ENCODE measurements at regions of chr6 and their contacts with region 1.

Region 1: GRCh38 chr6:3251462-3252314 is 7.1 kb upstream of the PSMG4 start:
- DNase-seq: peak; percentile 90
- H3K4me3 ChIP-seq: no peak overlapping the region
- H3K27ac ChIP-seq: peak overlapping the region in 1 of 4 donors; percentile 37
- H3K4me1 ChIP-seq: peaks cover 0 to 33% (median 25%) of the 10 kb centered on the region in 4 donors
- H3K27me3 ChIP-seq: no peaks in the 10 kb centered on the region
- CTCF ChIP-seq: peak; percentile 81 to 99 (median 94)
- EP300 ChIP-seq: no peak
- POLR2A ChIP-seq: no peak

Region 2: GRCh38 chr6:3125815-3126214 is 125.9 kb before region 1 on chr6:
- intact Hi-C with region 1: loop called (anchors 1 kb)
- DNase-seq: no peak
- H3K4me3 ChIP-seq: no peak overlapping the region
- H3K27ac ChIP-seq: no peak overlapping the region
- H3K4me1 ChIP-seq: no peaks in the 10 kb centered on the region
- H3K27me3 ChIP-seq: no peaks in the 10 kb centered on the region
- CTCF ChIP-seq: no peak
- EP300 ChIP-seq: no peak
- POLR2A ChIP-seq: no peak

Region 3: DNA sequence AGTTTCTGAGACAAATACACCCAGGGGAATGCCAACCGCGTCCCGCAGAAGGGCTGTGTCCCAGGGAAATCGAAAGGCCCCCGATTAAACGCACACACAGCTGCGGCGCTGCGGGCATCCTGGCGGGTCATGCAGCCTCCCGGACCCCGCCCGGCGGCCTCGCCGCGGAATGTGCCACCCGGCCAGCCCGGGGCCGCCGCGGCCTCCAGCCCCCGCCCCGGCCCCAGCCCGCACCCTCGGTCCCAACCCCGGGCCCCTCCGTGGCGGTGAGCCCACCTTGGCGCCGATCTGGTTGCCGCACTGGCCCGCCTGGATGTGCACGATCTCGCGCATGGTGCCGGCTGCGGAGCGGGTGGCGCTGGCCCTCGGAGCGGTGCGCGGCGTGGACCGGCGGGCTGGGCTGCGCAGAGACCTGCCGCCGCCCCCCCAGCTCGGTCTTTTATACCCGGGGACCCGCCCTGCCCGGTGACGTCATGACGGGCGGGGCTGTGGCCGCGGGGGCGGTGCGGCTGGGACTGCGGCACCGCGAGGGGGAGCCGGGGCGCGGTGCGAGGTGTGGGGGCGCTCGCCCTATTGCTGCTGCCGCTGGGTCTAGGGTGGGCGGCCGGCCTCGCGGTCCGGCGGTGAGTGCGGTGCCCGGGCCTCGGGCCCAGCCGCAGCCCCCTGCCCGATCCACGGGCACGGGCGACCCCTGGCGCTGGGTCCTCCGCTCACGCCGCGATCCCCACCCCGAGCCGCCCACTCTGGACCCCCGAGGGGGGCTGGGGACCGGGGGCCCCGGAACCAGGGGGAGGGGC is 94.4 kb before region 1 on chr6 and contains the start of gene TUBB2A:
- intact Hi-C with region 1: loop called (anchors 2 kb)
- DNase-seq: peak; percentile 95
- H3K4me3 ChIP-seq: peak within 1 kb of the TSS; percentile 66 to 99 (median 71)
- H3K27ac ChIP-seq: peak within 1 kb of the TSS; percentile 90 to 99 (median 96)
- H3K4me1 ChIP-seq: peaks cover 0 to 34% (median 14%) of the 10 kb centered on the region in 4 donors
- H3K27me3 ChIP-seq: no peaks in the 10 kb centered on the region
- CTCF ChIP-seq: peak in 2 of 4 experiments; percentile 12 to 52
- EP300 ChIP-seq: peak in 1 of 4 donors; percentile 45
- POLR2A ChIP-seq: peak; percentile 56 to 81
- total RNA-seq, gene TUBB2A: 54.5 to 106 (median 97.9) TPM

Region 4: GRCh38 chr6:3209114-3210023 is 42.3 kb before region 1 on chr6:
- intact Hi-C with region 1: no loop called
- DNase-seq: no peak
- H3K4me3 ChIP-seq: no peak overlapping the region
- H3K27ac ChIP-seq: peak overlapping the region; percentile 12 to 76 (median 28)
- H3K4me1 ChIP-seq: peaks cover 0 to 29% (median 21%) of the 10 kb centered on the region in 4 donors
- H3K27me3 ChIP-seq: no peaks in the 10 kb centered on the region
- CTCF ChIP-seq: no peak
- EP300 ChIP-seq: no peak
- POLR2A ChIP-seq: no peak

Region 5: GRCh38 chr6:3231247-3232016 is 20.3 kb before region 1 on chr6:
- intact Hi-C with region 1: loop called (anchors 2 kb)
- DNase-seq: peak; percentile 91
- H3K4me3 ChIP-seq: peak overlapping the region; percentile 57 to 68 (median 62)
- H3K27ac ChIP-seq: peak overlapping the region; percentile 82 to 91 (median 89)
- H3K4me1 ChIP-seq: peaks cover 0 to 57% (median 49%) of the 10 kb centered on the region in 4 donors
- H3K27me3 ChIP-seq: peaks cover 19 to 70% (median 42%) of the 10 kb centered on the region in 3 donors
- CTCF ChIP-seq: no peak
- EP300 ChIP-seq: peak in 1 of 4 donors; percentile 12
- POLR2A ChIP-seq: peak in 1 of 2 donors; percentile 43

Region 6: GRCh38 chr6:3294921-3295871 is 43.5 kb after region 1 on chr6:
- intact Hi-C with region 1: no loop called
- DNase-seq: peak; percentile 50
- H3K4me3 ChIP-seq: no peak overlapping the region
- H3K27ac ChIP-seq: no peak overlapping the region
- H3K4me1 ChIP-seq: no peaks in the 10 kb centered on the region
- H3K27me3 ChIP-seq: no peaks in the 10 kb centered on the region
- CTCF ChIP-seq: no peak
- EP300 ChIP-seq: no peak
- POLR2A ChIP-seq: no peak

Region 7: DNA sequence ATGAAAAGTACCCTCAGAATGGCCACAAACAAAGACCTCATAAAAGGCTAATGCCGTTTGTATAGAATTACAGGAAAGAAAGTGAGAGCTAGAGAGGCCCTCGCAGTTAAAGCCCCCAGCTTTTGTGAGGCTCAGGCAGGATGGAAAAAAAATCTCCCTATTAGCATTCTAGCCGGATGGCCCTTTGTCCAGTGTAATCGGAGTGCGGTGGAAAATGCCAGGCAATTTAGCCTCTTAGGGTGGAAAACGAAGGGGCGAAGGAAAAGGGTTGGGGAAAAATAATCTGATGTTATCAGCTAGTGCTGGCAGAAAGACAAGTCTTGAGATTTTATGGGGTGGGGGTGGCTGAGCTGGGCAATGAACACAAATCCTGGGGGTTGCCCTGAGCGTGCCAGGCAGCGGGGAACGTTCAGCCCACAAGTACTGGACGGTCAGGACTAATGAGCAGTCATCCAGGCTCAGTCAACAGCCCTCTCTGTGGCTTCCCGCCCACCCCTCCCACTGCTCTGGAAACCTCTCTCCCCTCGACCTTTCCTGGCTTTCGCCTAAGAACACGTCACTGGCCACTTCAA is 99.5 kb after region 1 on chr6:
- intact Hi-C with region 1: no loop called
- DNase-seq: peak; percentile 34
- H3K4me3 ChIP-seq: no peak overlapping the region
- H3K27ac ChIP-seq: peak overlapping the region in 3 of 4 donors; percentile 14 to 28 (median 25)
- H3K4me1 ChIP-seq: peaks cover 0 to 22% (median 19%) of the 10 kb centered on the region in 4 donors
- H3K27me3 ChIP-seq: no peaks in the 10 kb centered on the region
- CTCF ChIP-seq: no peak
- EP300 ChIP-seq: no peak
- POLR2A ChIP-seq: no peak

Measured in sigmoid colon (tissue), 7 donors.